Heart left ventricle (tissue), 16 donors: ENCODE measurements at regions of chr1 and their contacts with region 1.

Region 1: GRCh38 chr1:24652382-24652781 is 9.3 kb downstream of the SRRM1 start:
- DNase-seq: no peak
- ATAC-seq: no peak
- H3K4me3 ChIP-seq: no peak overlapping the region
- H3K27ac ChIP-seq: no peak overlapping the region
- H3K4me1 ChIP-seq: no peaks in the 10 kb centered on the region
- H3K27me3 ChIP-seq: no peaks in the 10 kb centered on the region
- CTCF ChIP-seq: no peak
- POLR2A ChIP-seq: no peak

Region 2: GRCh38 chr1:24673336-24673735 is 21.0 kb after region 1 on chr1:
- intact Hi-C with region 1: loop called in 1 of 10 experiments (anchors 2 kb)
- DNase-seq: no peak
- ATAC-seq: no peak
- H3K4me3 ChIP-seq: no peak overlapping the region
- H3K27ac ChIP-seq: no peak overlapping the region
- H3K4me1 ChIP-seq: peaks cover 0 to 2% (median 0%) of the 10 kb centered on the region in 12 donors
- H3K27me3 ChIP-seq: no peaks in the 10 kb centered on the region
- CTCF ChIP-seq: no peak
- POLR2A ChIP-seq: no peak

Region 3: GRCh38 chr1:25054526-25055323 is 402.3 kb after region 1 on chr1:
- intact Hi-C with region 1: no loop called
- DNase-seq: no peak
- ATAC-seq: no peak
- H3K4me3 ChIP-seq: no peak overlapping the region
- H3K27ac ChIP-seq: no peak overlapping the region
- H3K4me1 ChIP-seq: peaks cover 0 to 4% (median 0%) of the 10 kb centered on the region in 12 donors
- H3K27me3 ChIP-seq: peaks cover 0 to 36% (median 13%) of the 10 kb centered on the region in 9 donors
- CTCF ChIP-seq: no peak
- POLR2A ChIP-seq: no peak

Region 4: GRCh38 chr1:25223471-25223870 is 571.1 kb after region 1 on chr1:
- intact Hi-C with region 1: loop called in 4 of 10 experiments (anchors 5 to 10 kb)
- DNase-seq: no peak
- ATAC-seq: no peak
- H3K4me3 ChIP-seq: no peak overlapping the region
- H3K27ac ChIP-seq: no peak overlapping the region
- H3K4me1 ChIP-seq: no peaks in the 10 kb centered on the region
- H3K27me3 ChIP-seq: no peaks in the 10 kb centered on the region
- CTCF ChIP-seq: no peak
- POLR2A ChIP-seq: no peak